ENCODE measurements at regions of chr6 and their contacts with region 1.

Region 1: DNA sequence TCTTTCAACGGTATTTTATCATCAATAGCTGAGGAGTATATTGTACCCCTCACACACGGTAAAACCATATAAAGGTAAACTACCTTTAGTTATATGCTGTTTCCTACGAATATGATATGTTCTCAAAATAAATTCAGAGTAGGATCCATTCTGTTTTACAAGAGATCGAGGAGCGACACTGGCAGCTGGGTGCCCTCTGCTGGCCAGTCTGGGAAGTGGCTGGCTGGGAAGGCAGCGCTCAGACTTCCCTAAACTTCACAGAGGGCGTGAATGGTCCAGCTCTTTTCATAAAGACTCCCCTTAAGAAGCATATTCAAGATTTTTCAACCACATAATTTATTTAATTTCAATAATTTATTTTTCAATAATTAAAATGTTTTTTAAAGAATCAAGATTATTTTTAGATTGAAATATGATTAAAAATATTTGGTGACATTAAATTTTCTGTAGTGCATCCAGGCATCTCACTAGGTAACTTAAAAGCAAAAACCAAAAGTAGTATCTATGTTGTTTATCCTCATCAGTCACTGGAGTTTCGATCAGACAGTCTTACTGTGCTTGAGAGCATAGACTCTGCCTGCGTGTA is 187.5 kb upstream of the PDE10A start:
- DNase-seq: peak; percentile 69
- H3K4me3 Mint-ChIP-seq: no peak overlapping the region
- H3K27ac Mint-ChIP-seq: no peak overlapping the region
- H3K4me1 Mint-ChIP-seq: peaks cover 3% of the 10 kb centered on the region
- H3K27me3 Mint-ChIP-seq: peaks cover 76% of the 10 kb centered on the region

Region 2: GRCh38 chr6:165439928-165440554 is 410.5 kb before region 1 on chr6:
- CTCF ChIA-PET with region 1: interaction called, 20 read pairs
- DNase-seq: no peak
- H3K4me3 Mint-ChIP-seq: no peak overlapping the region
- H3K27ac Mint-ChIP-seq: no peak overlapping the region
- H3K4me1 Mint-ChIP-seq: no peaks in the 10 kb centered on the region
- H3K27me3 Mint-ChIP-seq: no peaks in the 10 kb centered on the region

Region 3: GRCh38 chr6:165729307-165729936 is 121.1 kb before region 1 on chr6:
- CTCF ChIA-PET with region 1: interaction called, 12 read pairs
- DNase-seq: peak; percentile 46
- H3K4me3 Mint-ChIP-seq: no peak overlapping the region
- H3K27ac Mint-ChIP-seq: no peak overlapping the region
- H3K4me1 Mint-ChIP-seq: no peaks in the 10 kb centered on the region
- H3K27me3 Mint-ChIP-seq: no peaks in the 10 kb centered on the region

Region 4: DNA sequence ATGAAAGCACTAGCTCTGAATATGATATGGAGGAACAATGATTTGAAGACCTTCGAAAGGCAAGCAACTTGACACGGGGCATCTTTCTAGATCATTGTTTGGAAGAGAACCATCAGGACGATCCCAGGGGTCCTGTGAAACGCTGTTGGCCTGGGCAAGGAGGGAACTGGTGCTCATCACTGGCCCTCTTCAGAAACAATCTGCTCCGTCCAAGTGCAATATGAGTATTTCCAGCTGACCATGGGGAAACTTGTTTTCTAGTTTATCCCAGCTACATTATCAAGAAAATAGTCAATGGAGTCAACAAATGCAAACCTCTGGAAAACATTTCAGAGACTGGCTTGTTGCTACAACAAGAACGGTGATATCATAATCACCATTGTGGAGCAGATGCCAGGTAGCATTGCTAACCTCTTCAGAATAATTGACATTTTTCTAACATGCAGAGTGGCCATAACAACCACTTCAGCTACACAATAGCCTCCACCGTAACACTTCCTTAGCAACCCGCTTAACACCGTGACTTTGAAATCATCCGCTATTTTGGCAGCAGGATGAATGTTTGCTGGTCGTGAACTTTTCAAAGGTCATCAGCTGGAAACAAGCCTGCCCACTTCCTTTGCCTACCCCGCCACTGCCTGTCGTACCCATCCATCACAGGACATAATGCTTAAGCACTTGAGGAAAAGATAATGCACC is 75.5 kb before region 1 on chr6:
- CTCF ChIA-PET with region 1: no interaction called
- DNase-seq: no peak
- H3K4me3 Mint-ChIP-seq: no peak overlapping the region
- H3K27ac Mint-ChIP-seq: no peak overlapping the region
- H3K4me1 Mint-ChIP-seq: no peaks in the 10 kb centered on the region
- H3K27me3 Mint-ChIP-seq: peaks cover 22% of the 10 kb centered on the region